Naive thymus-derived CD8-positive, alpha-beta T cell (primary cell): ENCODE measurements at regions of chr5 and their contacts with region 1.

Region 1: DNA sequence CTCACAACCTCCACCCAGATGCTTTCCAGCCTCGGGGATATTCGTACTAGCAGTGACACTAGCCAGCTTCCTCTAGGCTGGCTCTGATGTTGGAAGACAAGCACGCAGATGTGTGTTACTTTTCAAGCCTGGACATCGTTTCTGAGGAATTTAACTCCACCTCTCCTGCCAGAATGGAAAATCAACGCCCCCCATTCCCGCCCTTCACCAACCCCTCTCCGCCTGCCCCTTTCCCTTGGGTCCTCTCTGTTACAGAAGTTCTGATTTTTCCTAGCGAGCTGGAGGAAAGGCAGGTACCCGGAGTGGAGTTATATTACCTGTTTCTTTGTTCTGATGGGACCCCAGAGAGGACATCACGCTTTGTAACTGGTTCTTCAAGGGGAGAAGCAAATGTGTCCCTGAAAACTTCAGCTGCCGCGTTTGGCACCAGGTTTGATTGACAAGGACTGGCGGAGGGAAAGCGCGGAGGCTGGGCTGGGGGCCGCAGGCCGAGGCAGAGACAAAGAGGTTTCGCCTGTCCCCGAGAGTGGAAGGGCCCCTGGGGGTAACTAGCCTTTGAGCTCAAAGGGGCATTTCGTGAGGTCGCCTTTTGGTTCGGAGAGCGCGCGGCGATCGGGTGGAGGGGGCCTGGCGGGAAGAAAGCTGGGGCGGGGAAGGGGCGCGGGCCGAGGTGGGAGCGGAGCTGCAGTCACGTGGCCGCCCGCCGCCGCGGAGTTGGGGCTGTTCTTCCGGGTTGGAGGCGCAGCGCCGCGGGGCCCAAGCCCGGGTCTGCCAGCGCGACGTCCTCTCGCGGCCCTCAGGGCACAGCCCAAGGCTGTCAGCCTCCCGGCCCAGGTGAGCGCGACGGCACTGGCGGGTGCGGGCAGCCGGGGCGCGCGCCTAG is at the start of gene NNT:
- DNase-seq: peak; percentile 67 to 86 (median 76)
- ATAC-seq: peak; percentile 79 to 85
- H3K4me3 Mint-ChIP-seq: peak within 1 kb of the TSS; percentile 91 to 100 (median 94)
- H3K27ac Mint-ChIP-seq: peak within 1 kb of the TSS; percentile 91 to 98 (median 94)
- H3K4me1 Mint-ChIP-seq: peaks cover 30 to 70% (median 55%) of the 10 kb centered on the region in 4 donors
- H3K27me3 Mint-ChIP-seq: no peaks in the 10 kb centered on the region
- polyA plus RNA-seq, gene NNT: 38.8 to 52.7 (median 49.5) TPM

Region 2: GRCh38 chr5:42274913-42275312 is 1327.8 kb before region 1 on chr5:
- POLR2A ChIA-PET with region 1: no interaction called
- DNase-seq: no peak
- ATAC-seq: no peak
- H3K4me3 Mint-ChIP-seq: no peak overlapping the region
- H3K27ac Mint-ChIP-seq: no peak overlapping the region
- H3K4me1 Mint-ChIP-seq: no peaks in the 10 kb centered on the region
- H3K27me3 Mint-ChIP-seq: peaks cover 0 to 3% (median 0%) of the 10 kb centered on the region in 5 donors

Region 3: DNA sequence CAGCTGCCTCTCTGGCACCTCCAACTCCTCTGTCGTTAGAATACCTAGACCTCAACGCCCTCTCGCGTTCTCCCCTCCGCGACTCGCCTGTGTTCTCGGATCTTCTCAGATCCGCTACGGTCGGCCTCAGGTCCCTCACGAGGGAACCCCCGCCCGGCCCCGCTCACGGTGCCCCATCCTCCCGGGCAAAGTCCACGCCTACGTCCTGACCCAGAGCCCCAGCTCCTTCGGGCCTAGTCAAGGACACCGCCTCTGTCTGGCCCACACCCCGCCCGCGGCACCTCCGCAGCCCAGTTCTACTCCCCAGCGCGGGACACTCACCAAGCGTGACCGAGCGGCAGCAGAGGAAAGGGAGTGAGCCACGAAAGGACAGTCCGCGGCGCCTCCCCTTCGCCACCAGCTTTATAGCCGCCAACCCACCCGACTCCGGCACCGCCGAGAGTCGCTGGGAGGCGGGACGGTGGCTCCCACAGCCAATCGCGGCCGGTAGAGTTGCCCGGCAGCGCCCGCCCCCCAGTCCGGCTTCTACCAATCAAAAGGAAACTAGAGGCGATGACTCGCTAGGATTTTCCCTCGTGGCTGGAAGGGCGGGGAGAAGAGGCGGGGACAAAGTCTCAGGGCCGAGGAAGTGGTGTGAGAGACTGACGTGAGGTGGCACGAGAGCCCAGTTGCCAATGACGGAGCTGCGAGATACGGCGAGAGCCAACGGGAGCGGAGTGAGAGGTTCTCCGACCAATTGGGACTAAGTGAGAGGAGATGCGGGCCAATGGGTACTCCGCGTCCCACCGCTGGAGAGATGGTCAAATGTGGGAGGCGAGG is 289.5 kb before region 1 on chr5 and contains the start of gene HMGCS1:
- POLR2A ChIA-PET with region 1: interaction called, 11 read pairs
- DNase-seq: peak; percentile 94 to 100 (median 99)
- ATAC-seq: peak; percentile 90 to 92
- H3K4me3 Mint-ChIP-seq: peak within 1 kb of the TSS; percentile 90 to 99 (median 97)
- H3K27ac Mint-ChIP-seq: peak within 1 kb of the TSS; percentile 90 to 99 (median 96)
- H3K4me1 Mint-ChIP-seq: peaks cover 22 to 40% (median 34%) of the 10 kb centered on the region in 4 donors
- H3K27me3 Mint-ChIP-seq: peaks cover 0 to 2% (median 0%) of the 10 kb centered on the region in 5 donors
- polyA plus RNA-seq, gene HMGCS1: 4.0 to 11.6 (median 4.2) TPM

Region 4: GRCh38 chr5:43514816-43515677 is 87.7 kb before region 1 on chr5 and contains the start of gene C5orf34:
- POLR2A ChIA-PET with region 1: interaction called, 11 read pairs
- DNase-seq: peak; percentile 86 to 96 (median 91)
- ATAC-seq: peak; percentile 86
- H3K4me3 Mint-ChIP-seq: peak within 1 kb of the TSS; percentile 91 to 99 (median 96)
- H3K27ac Mint-ChIP-seq: peak within 1 kb of the TSS; percentile 93 to 99 (median 98)
- H3K4me1 Mint-ChIP-seq: peaks cover 16 to 38% (median 32%) of the 10 kb centered on the region in 4 donors
- H3K27me3 Mint-ChIP-seq: no peaks in the 10 kb centered on the region
- polyA plus RNA-seq, gene C5orf34: 0.77 to 2.0 (median 0.87) TPM

Region 5: GRCh38 chr5:43556857-43557542 is 45.7 kb before region 1 on chr5 and contains the start of gene PAIP1:
- POLR2A ChIA-PET with region 1: interaction called, 25 read pairs
- DNase-seq: peak; percentile 75 to 91 (median 81)
- ATAC-seq: peak; percentile 80 to 84
- H3K4me3 Mint-ChIP-seq: peak within 1 kb of the TSS in 9 of 10 donors; percentile 82 to 96 (median 93)
- H3K27ac Mint-ChIP-seq: peak within 1 kb of the TSS; percentile 93 to 100 (median 98)
- H3K4me1 Mint-ChIP-seq: peaks cover 4 to 9% (median 6%) of the 10 kb centered on the region in 4 donors
- H3K27me3 Mint-ChIP-seq: peaks cover 2 to 9% (median 4%) of the 10 kb centered on the region in 5 donors
- polyA plus RNA-seq, gene PAIP1: 31.3 to 45.7 (median 32.5) TPM